Gastrocnemius medialis (tissue), 4 donors: ENCODE measurements at regions of chr2 and their contacts with region 1.

Region 1: DNA sequence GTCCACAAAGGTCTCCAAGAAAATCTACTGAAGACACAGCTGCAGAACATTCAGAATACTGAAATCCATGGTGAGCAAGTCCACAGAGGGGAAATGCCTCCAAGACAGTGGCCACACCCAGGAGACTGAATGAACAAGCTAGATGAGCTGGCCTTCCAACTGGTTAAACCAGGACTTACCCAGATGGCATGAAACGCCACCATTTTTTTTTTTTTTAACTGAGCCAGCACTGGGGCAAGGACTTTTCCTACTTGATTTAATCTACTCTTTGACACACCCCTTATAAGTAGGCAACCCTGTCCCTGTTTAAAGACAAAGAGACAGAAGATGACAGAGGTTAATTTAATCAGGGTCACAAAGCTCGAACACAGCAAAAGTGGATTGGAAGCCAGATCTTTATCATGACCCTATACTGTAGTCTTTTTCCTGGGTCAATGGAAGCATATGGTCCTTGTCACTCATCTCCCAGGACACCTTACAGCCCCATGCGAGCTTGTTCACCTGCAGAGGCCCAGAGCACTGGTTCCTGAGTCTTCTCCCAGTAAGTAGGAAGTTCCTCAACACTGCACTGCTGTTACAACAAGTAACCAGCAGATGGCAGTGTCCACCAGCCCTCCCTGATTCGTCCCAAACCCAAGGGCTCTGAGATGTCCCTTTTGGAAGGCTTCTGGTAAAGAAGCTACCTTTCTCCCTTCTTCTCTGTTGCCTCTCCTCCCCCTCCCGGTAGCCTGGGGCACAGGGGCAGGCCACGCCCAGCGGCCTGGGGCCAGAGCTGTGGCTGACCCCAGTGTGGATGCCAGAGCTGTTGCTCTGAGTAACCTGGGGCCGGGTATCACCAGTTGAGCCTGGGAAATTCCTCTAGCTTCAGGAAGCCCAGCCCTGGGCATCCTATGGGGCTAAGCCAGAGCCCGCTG is 5.6 kb upstream of the GDF7 start:
- DNase-seq: peak; percentile 35 to 57
- ATAC-seq: peak; percentile 86 to 87
- H3K4me3 ChIP-seq: no peak overlapping the region
- H3K27ac ChIP-seq: no peak overlapping the region
- H3K4me1 ChIP-seq: peaks cover 0 to 13% of the 10 kb centered on the region in 2 donors
- H3K27me3 ChIP-seq: peaks cover 38 to 43% (median 42%) of the 10 kb centered on the region in 3 donors
- CTCF ChIP-seq: peak; percentile 84 to 97 (median 91)
- POLR2A ChIP-seq: no peak

Region 2: GRCh38 chr2:20496081-20496876 is 165.0 kb before region 1 on chr2:
- in situ Hi-C with region 1: no loop called
- intact Hi-C with region 1: no loop called
- DNase-seq: peak; percentile 91 to 94
- ATAC-seq: peak; percentile 87
- H3K4me3 ChIP-seq: no peak overlapping the region
- H3K27ac ChIP-seq: peak overlapping the region; percentile 69 to 92 (median 80)
- H3K4me1 ChIP-seq: peaks cover 13 to 19% of the 10 kb centered on the region in 2 donors
- H3K27me3 ChIP-seq: no peaks in the 10 kb centered on the region
- CTCF ChIP-seq: no peak
- POLR2A ChIP-seq: peak in 1 of 2 donors; percentile 7

Region 3: DNA sequence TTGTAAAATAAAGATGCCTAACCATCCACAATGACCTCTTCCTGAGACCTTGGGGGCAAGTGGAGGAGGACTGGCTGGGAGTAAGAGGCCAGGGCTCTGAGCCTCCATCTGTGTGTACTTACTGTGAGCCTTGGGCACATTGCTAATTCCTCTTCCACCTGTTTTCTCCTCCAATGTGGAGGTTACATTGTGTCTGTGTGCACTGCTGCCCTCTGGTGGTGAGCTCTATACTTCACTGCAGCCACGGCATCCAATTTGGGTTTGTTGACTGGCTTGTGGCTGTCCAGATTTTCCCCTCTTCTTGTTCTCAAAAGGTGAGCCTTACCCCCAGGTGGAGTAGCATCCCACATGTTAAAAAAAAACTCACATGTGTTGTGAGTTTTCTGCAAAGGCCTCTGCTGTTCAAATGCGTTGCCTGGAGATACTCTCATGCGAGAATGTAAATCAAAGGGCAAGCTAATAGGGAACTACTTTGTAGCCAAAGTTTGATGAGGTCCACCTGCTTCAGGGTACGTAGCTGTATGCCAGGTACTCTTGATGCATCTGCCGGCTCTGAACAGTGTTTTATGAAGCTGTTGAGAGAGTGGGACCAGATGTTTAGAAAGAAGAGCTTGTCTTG is 301.7 kb after region 1 on chr2:
- in situ Hi-C with region 1: loop called (anchors 5 to 10 kb)
- intact Hi-C with region 1: loop called (anchors 1 kb)
- DNase-seq: peak; percentile 40 to 56
- ATAC-seq: peak; percentile 83 to 90
- H3K4me3 ChIP-seq: no peak overlapping the region
- H3K27ac ChIP-seq: no peak overlapping the region
- H3K4me1 ChIP-seq: peaks cover 6 to 9% of the 10 kb centered on the region in 2 donors
- H3K27me3 ChIP-seq: no peaks in the 10 kb centered on the region
- CTCF ChIP-seq: peak; percentile 55 to 86 (median 83)
- POLR2A ChIP-seq: no peak

Region 4: DNA sequence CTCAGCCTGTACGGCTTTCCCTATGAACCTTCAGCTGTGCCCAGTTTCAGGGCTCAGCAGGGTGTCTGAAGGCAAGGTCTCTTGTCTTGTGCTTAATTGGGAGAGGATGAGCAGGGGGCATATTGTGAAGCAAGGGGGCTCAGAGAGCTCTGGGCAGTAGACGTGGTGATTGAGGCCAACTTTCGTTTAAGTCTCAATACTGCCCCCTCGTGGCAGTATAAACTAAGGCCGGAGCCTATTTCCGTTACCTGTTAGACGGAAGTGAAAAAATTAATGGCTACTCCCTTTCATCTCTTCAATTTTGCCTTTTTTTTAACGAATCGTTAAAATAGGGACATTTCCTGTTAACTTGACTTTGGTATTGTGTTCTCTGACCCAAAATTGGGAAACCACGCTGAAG is 655.8 kb after region 1 on chr2:
- in situ Hi-C with region 1: no loop called
- intact Hi-C with region 1: loop called (anchors 5 kb)
- DNase-seq: no peak
- ATAC-seq: no peak
- H3K4me3 ChIP-seq: no peak overlapping the region
- H3K27ac ChIP-seq: no peak overlapping the region
- H3K4me1 ChIP-seq: no peaks in the 10 kb centered on the region
- H3K27me3 ChIP-seq: no peaks in the 10 kb centered on the region
- CTCF ChIP-seq: peak in 4 of 5 experiments; percentile 18 to 61 (median 48)
- POLR2A ChIP-seq: no peak